Activated CD8-positive, alpha-beta T cell treated with anti-CD3 and anti-CD28 coated beads, Interleukin-2, amount 10 ng/mL, durations not matched to agents 7 days and 5 days (primary cell): ENCODE measurements at regions of chr2 and their contacts with region 1.

Region 1: GRCh38 chr2:196205881-196206435 is 34.6 kb upstream of the STK17B start:
- DNase-seq: no peak
- ATAC-seq: no peak
- H3K4me3 Mint-ChIP-seq: no peak overlapping the region
- H3K27ac Mint-ChIP-seq: no peak overlapping the region
- H3K4me1 Mint-ChIP-seq: peaks cover 57% of the 10 kb centered on the region
- H3K27me3 Mint-ChIP-seq: no peaks in the 10 kb centered on the region

Region 2: DNA sequence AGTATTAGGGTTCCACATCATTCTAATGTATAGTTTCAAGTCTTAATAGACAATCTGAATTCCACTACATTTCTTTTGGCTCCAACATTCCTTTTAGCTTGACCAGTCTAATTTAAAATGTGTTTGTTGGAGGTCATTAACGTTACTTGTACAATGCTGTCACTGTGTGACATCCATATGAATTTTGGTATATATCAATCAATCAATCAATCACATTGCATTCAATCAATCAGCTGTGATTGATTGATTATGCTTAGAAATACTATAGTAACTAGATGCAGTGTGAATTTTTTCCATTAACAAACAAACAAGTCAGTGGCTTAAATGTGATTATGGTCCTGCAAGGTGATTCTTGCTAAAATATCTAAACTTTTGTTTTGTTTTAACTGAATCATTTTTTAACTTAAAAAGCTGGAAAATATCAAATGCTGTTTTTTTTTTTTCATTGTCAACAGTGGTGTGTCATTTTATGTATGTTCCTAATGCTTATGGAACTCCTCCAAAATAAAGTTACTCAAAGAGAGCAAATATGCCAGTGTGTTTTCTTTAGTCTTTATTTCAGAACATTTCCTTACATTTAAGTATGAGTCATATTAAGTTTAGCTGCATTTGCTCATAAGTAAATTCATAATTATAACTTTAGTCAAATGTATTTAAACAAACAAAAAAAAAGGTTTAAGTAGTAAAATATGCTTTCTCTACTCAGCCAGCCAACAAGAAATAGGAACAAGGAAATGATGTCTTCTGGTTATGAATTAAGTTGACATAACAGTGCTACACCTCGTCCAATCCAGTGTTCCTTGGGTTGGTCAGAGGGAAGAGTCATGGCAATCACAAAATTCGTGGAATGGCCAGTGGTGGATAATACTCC is 468.6 kb before region 1 on chr2:
- CTCF ChIA-PET with region 1: no interaction called
- POLR2A ChIA-PET with region 1: no interaction called
- DNase-seq: no peak
- ATAC-seq: no peak
- H3K4me3 Mint-ChIP-seq: no peak overlapping the region
- H3K27ac Mint-ChIP-seq: no peak overlapping the region
- H3K4me1 Mint-ChIP-seq: no peaks in the 10 kb centered on the region
- H3K27me3 Mint-ChIP-seq: no peaks in the 10 kb centered on the region

Region 3: DNA sequence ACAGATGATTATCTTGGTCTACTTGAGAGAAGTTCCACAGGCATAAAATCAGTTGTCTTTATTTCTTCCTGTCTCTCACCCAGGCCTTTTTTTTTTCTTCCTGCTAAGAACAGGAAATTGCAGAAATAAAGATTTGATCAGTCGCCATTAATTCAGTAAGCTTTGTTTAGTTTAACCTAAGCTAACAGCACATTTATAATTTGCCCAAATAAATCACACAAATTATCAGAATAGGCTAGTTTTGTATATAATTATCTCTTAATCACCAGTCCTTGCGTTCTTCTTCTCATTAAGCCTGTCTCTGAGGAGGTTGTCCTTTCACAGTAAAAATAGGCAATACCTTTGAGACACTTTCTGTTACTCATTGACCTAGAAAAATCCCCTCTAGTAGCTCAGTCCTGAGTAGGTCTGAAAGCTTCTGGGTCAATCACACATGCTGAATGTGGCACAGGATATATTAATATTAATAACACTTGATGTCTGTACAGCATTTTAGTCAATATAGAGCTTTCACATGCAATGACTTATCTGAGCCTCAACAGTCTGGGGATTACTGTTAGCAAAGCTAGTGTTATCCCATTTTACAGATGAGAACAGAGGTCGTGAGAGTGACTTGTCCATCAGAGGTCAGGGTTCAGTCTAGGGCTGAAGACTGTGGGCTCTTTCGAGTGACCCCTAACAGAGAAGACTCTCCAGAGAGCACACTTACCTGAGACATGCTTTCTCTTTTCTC is 23.4 kb before region 1 on chr2:
- CTCF ChIA-PET with region 1: interaction called, 8 read pairs
- POLR2A ChIA-PET with region 1: interaction called, 39 read pairs
- DNase-seq: no peak
- ATAC-seq: peak; percentile 13
- H3K4me3 Mint-ChIP-seq: peak overlapping the region; percentile 62
- H3K27ac Mint-ChIP-seq: peak overlapping the region; percentile 95
- H3K4me1 Mint-ChIP-seq: peaks cover 89% of the 10 kb centered on the region
- H3K27me3 Mint-ChIP-seq: no peaks in the 10 kb centered on the region

Region 4: DNA sequence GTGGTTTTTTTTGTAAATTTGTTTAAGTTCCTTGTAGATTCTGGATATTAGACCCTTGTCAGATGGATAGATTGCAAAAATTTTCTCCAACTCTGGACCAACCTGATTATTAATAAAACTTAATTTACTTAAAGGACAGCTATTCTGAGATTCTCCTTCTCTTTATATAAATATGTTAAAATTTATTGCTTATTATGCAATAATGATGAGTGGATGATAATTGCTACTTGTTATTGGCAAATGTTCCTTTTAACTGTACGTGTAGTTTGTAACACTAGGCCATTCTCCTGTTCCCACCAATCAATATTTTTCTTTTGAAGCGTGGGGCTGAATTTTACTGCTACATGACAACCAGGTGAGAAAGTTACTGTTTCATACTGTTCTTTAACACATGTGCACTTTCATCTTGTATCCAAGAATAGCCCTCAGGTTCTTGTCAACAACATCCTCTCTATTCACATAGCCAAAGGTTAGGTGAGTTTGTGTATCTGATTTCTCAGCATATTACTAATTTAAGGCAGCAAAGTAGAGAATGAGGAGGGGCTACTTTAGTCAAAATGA is 18.0 kb before region 1 on chr2:
- CTCF ChIA-PET with region 1: interaction called, 8 read pairs
- POLR2A ChIA-PET with region 1: interaction called, 30 read pairs
- DNase-seq: no peak
- ATAC-seq: no peak
- H3K4me3 Mint-ChIP-seq: no peak overlapping the region
- H3K27ac Mint-ChIP-seq: peak overlapping the region; percentile 5
- H3K4me1 Mint-ChIP-seq: peaks cover 72% of the 10 kb centered on the region
- H3K27me3 Mint-ChIP-seq: no peaks in the 10 kb centered on the region

Region 5: DNA sequence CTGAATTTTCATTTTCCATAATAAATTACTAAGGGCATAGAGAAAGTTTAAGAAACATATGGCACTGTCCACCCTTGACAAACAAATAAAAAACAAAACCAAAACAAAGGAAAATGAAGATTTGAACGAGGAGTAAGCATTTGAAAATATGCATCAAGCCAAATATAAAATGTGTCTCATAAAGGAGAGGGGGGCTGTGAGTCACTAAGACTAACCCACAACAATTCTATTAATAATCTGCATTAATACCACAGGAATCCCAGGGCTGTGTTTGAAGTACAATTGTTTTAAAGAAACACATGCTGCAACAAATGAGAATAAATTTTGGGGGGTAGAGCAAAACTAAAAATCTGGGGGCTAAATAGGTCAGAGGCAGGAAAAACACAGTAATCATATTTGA is 19.3 kb after region 1 on chr2:
- CTCF ChIA-PET with region 1: interaction called, 11 read pairs
- POLR2A ChIA-PET with region 1: interaction called, 20 read pairs
- DNase-seq: no peak
- ATAC-seq: no peak
- H3K4me3 Mint-ChIP-seq: peak overlapping the region; percentile 12
- H3K27ac Mint-ChIP-seq: peak overlapping the region; percentile 27
- H3K4me1 Mint-ChIP-seq: peaks cover 80% of the 10 kb centered on the region
- H3K27me3 Mint-ChIP-seq: no peaks in the 10 kb centered on the region

Region 6: GRCh38 chr2:196233021-196233804 is 27.3 kb after region 1 on chr2:
- CTCF ChIA-PET with region 1: interaction called, 10 read pairs
- POLR2A ChIA-PET with region 1: interaction called, 34 read pairs
- DNase-seq: no peak
- ATAC-seq: no peak
- H3K4me3 Mint-ChIP-seq: peak overlapping the region; percentile 30
- H3K27ac Mint-ChIP-seq: peak overlapping the region; percentile 95
- H3K4me1 Mint-ChIP-seq: peaks cover 93% of the 10 kb centered on the region
- H3K27me3 Mint-ChIP-seq: no peaks in the 10 kb centered on the region

Region 7: DNA sequence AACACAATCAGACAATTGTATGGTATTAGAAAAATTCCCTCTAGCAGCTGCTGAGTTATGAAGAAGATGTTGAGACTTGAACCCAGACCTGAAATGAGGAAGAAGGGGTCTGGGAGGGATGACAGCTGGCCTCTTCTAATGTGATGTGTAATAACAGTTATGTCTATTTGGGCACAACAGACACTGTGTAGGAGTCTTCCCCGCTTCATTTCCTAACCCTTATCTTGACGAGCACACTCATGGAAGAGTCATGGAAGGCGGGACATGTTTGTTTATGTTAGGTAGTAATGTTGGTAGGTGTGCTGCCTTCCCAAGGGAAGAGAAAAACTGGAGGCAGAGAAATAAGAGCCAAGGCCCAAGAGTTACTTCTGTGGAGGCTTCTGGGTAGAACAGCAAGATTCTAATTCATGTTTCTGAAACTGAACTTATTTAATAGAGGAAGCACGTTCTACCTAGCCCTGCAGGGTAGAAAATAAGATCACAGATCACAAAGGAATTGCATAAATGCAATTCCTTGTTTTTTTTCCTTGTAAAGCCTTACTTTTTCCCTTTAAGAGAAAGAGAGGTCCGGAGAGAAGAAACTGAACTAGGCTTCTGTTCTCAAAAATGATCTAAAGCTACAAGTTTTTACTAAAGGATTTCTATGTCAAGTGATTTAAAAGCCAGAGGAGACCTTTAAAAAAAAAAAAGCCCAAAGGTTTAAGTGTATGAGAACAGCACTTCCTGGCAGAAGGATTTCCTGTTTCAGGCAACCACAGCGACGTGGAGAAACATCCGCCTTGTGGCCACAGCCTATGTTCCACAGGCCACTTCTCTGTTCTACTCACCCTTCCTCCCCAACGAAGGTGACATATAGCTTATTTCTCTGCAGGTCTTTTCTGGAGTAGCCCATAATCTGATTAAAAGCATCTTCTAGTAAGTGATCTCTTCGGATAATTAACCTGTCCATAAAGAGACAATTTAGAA is 33.9 kb after region 1 on chr2:
- CTCF ChIA-PET with region 1: interaction called, 10 read pairs
- POLR2A ChIA-PET with region 1: interaction called, 34 read pairs
- DNase-seq: peak; percentile 94
- ATAC-seq: peak; percentile 75
- H3K4me3 Mint-ChIP-seq: peak overlapping the region; percentile 58
- H3K27ac Mint-ChIP-seq: peak overlapping the region; percentile 99
- H3K4me1 Mint-ChIP-seq: peaks cover 86% of the 10 kb centered on the region
- H3K27me3 Mint-ChIP-seq: no peaks in the 10 kb centered on the region